CD4-positive, alpha-beta memory T cell (primary cell): ENCODE measurements at regions of chr18 and their contacts with region 1.

Region 1: GRCh38 chr18:58768293-58768974 is 96.2 kb upstream of the ZNF532 start:
- DNase-seq: peak in 4 of 5 donors; percentile 53 to 61 (median 57)
- H3K4me3 ChIP-seq: peak overlapping the region in 1 of 2 donors; percentile 12
- H3K4me3 Mint-ChIP-seq: peak overlapping the region in 7 of 8 donors; percentile 62 to 83 (median 67)
- H3K27ac ChIP-seq: no peak overlapping the region
- H3K27ac Mint-ChIP-seq: no peak overlapping the region
- H3K4me1 ChIP-seq: peaks cover 15% of the 10 kb centered on the region
- H3K4me1 Mint-ChIP-seq: peaks cover 3 to 15% (median 10%) of the 10 kb centered on the region in 4 donors
- H3K27me3 ChIP-seq: peaks cover 4% of the 10 kb centered on the region
- H3K27me3 Mint-ChIP-seq: peaks cover 23 to 31% of the 10 kb centered on the region in 2 donors

Region 2: DNA sequence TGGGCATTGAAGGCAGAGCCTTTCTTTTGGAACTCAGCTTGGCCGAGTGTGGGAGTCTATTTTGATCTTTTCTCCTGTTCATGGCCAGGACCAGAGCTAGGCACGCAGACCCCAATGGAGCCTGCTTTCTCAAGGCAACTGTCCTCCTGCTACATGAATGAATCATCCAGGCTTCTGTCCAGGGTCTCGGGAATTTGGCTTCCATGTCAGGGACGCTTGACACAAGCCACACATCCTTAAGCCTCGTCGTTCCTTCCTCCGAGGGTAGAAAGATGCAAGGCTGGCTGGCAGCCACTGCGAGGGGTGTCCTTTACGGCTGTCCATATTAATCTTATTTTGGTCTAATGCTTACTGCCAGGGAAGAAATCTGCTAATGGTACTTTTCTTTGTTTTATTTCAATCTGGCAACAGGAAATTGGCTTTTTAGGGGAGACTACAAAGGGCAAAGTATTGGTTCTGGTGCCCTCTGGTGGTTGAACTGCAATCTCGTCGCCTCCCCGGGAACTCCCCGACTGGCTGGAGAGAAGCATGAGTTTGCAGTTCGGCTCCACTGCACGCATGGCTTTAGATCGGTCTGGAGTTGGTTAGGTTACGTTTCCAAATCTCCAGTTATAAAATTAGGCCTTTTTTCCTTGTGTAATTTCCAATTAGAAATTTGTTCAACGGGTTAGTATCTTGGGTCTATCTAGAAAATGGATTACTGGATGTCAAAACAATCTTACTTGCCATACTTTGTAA is 274.7 kb before region 1 on chr18:
- CTCF ChIA-PET with region 1: interaction called, 25 read pairs
- POLR2A ChIA-PET with region 1: no interaction called
- intact Hi-C with region 1: loop called (anchors 1 kb)
- DNase-seq: peak; percentile 60 to 73 (median 62)
- H3K4me3 ChIP-seq: no peak overlapping the region
- H3K4me3 Mint-ChIP-seq: peak overlapping the region in 3 of 8 donors; percentile 8 to 23 (median 21)
- H3K27ac ChIP-seq: no peak overlapping the region
- H3K27ac Mint-ChIP-seq: peak overlapping the region in 2 of 7 donors; percentile 23 to 32
- H3K4me1 ChIP-seq: peaks cover 7% of the 10 kb centered on the region
- H3K4me1 Mint-ChIP-seq: peaks cover 4 to 15% (median 5%) of the 10 kb centered on the region in 4 donors
- H3K27me3 ChIP-seq: no peaks in the 10 kb centered on the region
- H3K27me3 Mint-ChIP-seq: peaks cover 22% of the 10 kb centered on the region in 2 donors

Region 3: DNA sequence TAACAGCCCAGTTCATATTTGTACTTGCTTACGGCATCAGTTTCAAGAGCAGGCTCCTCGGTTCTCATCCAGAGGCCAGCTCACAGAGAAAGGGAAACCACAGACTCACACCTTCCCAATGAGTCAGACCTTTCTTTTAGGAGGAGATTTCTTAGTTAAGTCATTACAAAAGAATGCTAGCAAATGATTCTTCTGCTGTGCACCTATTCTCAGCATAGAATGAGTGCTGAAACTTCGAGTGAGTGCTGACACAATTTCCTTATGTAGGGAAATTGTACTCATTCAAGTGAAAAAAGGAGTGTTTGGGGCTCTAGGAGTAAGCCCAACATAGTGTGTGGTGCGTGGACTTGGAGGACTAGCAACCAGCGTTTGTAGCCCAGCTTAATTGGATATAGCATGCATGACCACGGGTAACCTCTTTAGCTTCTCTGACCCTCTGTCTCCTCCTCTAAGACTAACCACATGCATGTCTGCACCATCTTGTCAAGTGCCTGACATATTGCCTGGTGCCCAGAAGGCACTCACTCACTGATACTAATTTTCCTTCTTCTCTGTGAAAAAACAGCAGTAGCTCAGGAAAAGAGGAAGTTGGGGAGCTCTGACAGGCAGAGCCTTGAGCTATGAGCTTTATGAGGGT is 226.5 kb before region 1 on chr18:
- CTCF ChIA-PET with region 1: interaction called, 827 read pairs
- POLR2A ChIA-PET with region 1: interaction called, 4 read pairs
- intact Hi-C with region 1: loop called (anchors 1 kb)
- DNase-seq: peak; percentile 17 to 77 (median 37)
- H3K4me3 ChIP-seq: no peak overlapping the region
- H3K4me3 Mint-ChIP-seq: peak overlapping the region in 5 of 8 donors; percentile 38 to 65 (median 52)
- H3K27ac ChIP-seq: no peak overlapping the region
- H3K27ac Mint-ChIP-seq: peak overlapping the region in 6 of 7 donors; percentile 1 to 90 (median 70)
- H3K4me1 ChIP-seq: peaks cover 21% of the 10 kb centered on the region
- H3K4me1 Mint-ChIP-seq: peaks cover 21 to 31% (median 23%) of the 10 kb centered on the region in 4 donors
- H3K27me3 ChIP-seq: no peaks in the 10 kb centered on the region
- H3K27me3 Mint-ChIP-seq: no peaks in the 10 kb centered on the region

Region 4: DNA sequence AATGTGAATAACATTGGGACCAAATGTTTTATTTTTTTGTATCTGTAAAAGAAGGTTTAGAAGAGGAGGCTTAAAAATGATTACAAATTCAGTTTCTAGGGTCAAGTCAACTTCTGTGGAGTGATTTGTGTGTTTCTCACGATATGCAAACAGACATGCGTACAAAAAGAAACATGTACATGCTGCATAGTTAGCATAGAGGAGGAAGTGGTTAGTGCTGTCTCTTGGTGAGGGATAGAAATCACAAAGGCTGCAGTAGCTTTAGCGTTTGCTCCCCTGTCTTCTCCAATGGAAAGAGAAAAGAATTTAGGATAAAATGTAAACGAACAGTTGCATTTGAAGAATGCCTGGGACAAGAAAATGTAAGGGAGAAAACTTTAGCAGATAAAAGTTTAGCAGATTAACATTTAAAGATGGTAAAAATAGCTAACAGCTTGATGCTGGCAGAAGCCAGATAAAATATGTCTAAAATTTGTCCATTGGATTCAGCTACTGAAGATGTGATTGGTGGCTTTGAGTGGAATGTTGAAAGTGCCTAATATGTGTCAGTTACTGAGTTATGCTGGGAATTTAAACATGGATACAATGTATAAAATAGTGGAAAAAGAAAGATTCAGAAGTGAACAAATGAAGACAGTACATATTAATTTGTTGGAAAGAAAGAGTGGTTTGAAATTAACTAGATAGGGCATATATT is 52.2 kb before region 1 on chr18:
- CTCF ChIA-PET with region 1: interaction called, 15 read pairs
- POLR2A ChIA-PET with region 1: no interaction called
- intact Hi-C with region 1: loop called (anchors 2 kb)
- DNase-seq: peak in 4 of 5 donors; percentile 33 to 42 (median 37)
- H3K4me3 ChIP-seq: no peak overlapping the region
- H3K4me3 Mint-ChIP-seq: peak overlapping the region; percentile 32 to 88 (median 80)
- H3K27ac ChIP-seq: no peak overlapping the region
- H3K27ac Mint-ChIP-seq: peak overlapping the region; percentile 77 to 90 (median 85)
- H3K4me1 ChIP-seq: peaks cover 44% of the 10 kb centered on the region
- H3K4me1 Mint-ChIP-seq: peaks cover 50 to 68% (median 57%) of the 10 kb centered on the region in 4 donors
- H3K27me3 ChIP-seq: no peaks in the 10 kb centered on the region
- H3K27me3 Mint-ChIP-seq: no peaks in the 10 kb centered on the region

Region 5: DNA sequence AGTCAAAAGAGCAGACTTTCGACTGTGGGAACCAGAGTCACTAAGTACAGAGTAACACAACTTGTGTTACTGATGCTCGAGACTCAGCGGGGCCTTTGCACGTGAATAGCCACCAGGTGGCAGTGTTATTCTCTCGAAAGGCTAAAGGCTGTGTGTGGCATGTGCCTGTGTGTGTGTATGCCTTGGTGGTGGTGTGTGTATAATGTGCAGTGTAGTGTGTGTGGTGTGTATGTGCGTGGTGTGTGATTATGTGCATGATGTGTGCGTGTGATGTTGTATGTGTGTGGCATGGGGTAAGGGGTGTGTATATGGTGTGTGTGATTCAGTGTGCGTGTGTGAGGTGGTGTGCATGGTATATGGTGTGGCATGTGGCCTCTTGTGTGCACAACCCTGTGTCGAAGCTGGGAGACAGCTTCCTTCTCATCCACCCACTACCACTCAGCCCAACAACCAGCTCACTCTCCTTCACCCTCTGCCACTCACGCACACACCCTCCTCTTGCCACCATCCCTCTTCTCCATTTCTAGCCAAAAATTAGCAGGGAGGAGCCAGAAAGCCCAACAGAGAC is 13.3 kb after region 1 on chr18:
- CTCF ChIA-PET with region 1: interaction called, 56 read pairs
- POLR2A ChIA-PET with region 1: no interaction called
- intact Hi-C with region 1: no loop called
- DNase-seq: peak; percentile 57 to 63 (median 62)
- H3K4me3 ChIP-seq: no peak overlapping the region
- H3K4me3 Mint-ChIP-seq: no peak overlapping the region
- H3K27ac ChIP-seq: no peak overlapping the region
- H3K27ac Mint-ChIP-seq: no peak overlapping the region
- H3K4me1 ChIP-seq: no peaks in the 10 kb centered on the region
- H3K4me1 Mint-ChIP-seq: peaks cover 0 to 6% (median 3%) of the 10 kb centered on the region in 4 donors
- H3K27me3 ChIP-seq: no peaks in the 10 kb centered on the region
- H3K27me3 Mint-ChIP-seq: peaks cover 5 to 12% of the 10 kb centered on the region in 2 donors

Region 6: GRCh38 chr18:58991167-58991798 is 222.8 kb after region 1 on chr18:
- CTCF ChIA-PET with region 1: no interaction called
- POLR2A ChIA-PET with region 1: no interaction called
- intact Hi-C with region 1: no loop called
- DNase-seq: no peak
- H3K4me3 ChIP-seq: no peak overlapping the region
- H3K4me3 Mint-ChIP-seq: no peak overlapping the region
- H3K27ac ChIP-seq: no peak overlapping the region
- H3K27ac Mint-ChIP-seq: no peak overlapping the region
- H3K4me1 ChIP-seq: no peaks in the 10 kb centered on the region
- H3K4me1 Mint-ChIP-seq: no peaks in the 10 kb centered on the region
- H3K27me3 ChIP-seq: peaks cover 3% of the 10 kb centered on the region
- H3K27me3 Mint-ChIP-seq: peaks cover 22% of the 10 kb centered on the region in 2 donors